Sigmoid colon (tissue), 7 donors: ENCODE measurements at regions of chr6 and their contacts with region 1.

Region 1: GRCh38 chr6:97064578-97064977 is 140.1 kb downstream of the KLHL32 start:
- DNase-seq: no peak
- H3K4me3 ChIP-seq: no peak overlapping the region
- H3K27ac ChIP-seq: no peak overlapping the region
- H3K4me1 ChIP-seq: no peaks in the 10 kb centered on the region
- H3K27me3 ChIP-seq: no peaks in the 10 kb centered on the region
- CTCF ChIP-seq: no peak
- EP300 ChIP-seq: no peak
- POLR2A ChIP-seq: no peak

Region 2: DNA sequence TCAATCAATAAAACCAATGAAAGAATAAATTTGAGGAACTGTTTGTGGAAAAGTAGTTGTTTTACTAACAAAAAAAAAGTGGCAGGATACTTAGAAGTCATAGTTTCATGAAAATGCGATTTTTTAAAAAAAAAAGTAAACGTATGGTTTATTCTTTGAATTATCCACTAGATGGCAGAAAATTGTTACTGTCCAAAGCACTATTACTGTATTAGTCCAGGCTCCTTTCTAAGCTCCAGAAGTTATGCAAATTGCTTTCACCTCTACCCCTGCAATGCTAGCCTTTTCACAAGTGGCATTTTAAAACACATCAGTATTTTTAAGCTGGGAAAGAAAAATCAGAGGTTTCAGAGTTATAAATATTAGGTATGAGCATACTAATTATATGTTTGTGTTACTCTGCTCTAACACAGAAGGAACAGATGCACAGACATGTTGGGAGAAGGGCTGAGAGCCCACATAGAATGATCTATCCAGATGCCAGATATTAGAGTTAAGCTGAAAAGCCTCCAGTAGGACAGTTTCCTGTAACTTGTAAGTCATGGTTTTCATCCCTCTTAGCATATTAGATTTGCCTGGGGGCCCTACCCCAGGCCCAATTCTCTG is 437.7 kb before region 1 on chr6:
- intact Hi-C with region 1: loop called (anchors 5 kb)
- DNase-seq: no peak
- H3K4me3 ChIP-seq: no peak overlapping the region
- H3K27ac ChIP-seq: no peak overlapping the region
- H3K4me1 ChIP-seq: no peaks in the 10 kb centered on the region
- H3K27me3 ChIP-seq: no peaks in the 10 kb centered on the region
- CTCF ChIP-seq: peak in 1 of 4 experiments; percentile 21
- EP300 ChIP-seq: no peak
- POLR2A ChIP-seq: no peak